ENCODE measurements at regions of chr12 and their contacts with region 1.

Region 1: DNA sequence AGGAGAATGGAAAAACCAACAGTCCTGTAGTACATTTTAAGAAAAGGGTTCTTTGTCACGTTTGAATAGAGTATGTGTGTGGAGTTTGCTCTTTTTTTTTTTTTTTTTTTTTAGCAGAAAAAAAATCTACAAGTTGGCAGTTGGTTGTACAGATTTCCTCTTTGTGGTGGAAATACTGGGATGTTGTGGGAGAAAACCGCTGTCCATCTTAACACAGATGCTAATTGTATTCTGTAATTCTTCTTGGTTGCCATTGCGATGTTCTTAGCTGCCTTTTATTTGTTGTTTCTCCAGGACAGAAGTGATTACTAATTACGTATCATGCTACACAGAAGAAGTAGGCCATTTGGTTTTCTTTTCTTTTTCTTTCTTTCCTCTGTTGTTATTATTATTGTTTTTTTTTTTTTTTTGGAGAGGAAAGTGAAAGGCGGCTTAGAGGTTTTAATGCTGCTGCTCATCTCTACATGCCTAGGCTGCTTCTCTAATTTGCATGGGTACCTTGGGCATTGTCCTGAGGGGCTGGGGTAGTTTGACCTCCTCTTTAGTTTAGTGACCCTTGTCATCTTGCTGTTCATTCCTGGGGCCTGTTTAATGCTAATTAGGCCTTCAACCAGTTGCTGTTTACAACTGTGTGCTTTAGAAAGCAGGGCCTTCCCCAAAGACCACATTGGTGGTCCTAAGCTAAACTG is 94.7 kb downstream of the TMTC2 start:
- DNase-seq: peak; percentile 30
- H3K4me3 ChIP-seq: no peak overlapping the region
- H3K27ac ChIP-seq: no peak overlapping the region
- H3K4me1 ChIP-seq: no peaks in the 10 kb centered on the region
- H3K27me3 ChIP-seq: no peaks in the 10 kb centered on the region
- CTCF ChIP-seq: no peak

Region 2: DNA sequence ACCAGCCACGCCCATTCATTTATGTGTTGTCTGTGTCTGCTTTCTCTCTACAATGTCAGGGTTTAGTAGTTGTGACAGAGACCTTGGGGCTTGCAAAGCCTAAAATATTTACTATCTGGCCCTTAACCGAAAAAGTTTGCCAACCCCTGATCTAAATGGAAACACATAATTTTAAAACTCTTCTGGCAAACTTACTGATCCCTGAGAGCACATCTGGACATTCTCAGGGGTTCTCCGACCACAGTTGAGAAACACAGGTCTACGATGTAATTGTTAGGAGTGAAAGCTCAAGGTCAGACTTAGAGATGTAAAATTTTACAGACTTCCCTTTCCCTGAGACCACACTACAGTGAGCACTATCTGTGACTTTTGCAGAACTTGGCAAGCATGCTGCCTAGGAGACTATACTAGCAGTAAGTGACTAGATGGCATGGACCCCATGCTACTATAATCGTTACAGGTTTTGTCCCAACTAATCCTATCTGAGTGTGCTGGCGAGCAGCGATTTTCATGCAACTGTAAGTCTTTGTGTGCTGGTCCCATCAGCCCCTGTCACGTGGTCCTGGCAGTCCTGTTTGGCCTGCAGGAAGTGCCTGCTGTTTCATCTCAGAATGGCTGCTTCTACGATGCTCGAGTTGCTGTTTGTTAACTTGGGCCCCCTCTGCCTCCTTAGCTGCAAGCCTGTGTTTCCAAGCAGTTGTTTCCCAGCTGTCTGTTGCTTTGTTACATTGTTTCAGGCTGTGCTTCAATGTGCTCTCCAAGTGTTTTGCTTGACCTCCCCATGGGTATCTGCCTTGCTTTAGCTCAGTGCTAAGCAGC is 73.2 kb before region 1 on chr12:
- CTCF ChIA-PET with region 1: no interaction called
- dilution Hi-C with region 1: no loop called
- in situ Hi-C with region 1: no loop called
- intact Hi-C with region 1: no loop called
- DNase-seq: no peak
- H3K4me3 ChIP-seq: no peak overlapping the region
- H3K27ac ChIP-seq: no peak overlapping the region
- H3K4me1 ChIP-seq: no peaks in the 10 kb centered on the region
- H3K27me3 ChIP-seq: no peaks in the 10 kb centered on the region
- CTCF ChIP-seq: no peak

Region 3: DNA sequence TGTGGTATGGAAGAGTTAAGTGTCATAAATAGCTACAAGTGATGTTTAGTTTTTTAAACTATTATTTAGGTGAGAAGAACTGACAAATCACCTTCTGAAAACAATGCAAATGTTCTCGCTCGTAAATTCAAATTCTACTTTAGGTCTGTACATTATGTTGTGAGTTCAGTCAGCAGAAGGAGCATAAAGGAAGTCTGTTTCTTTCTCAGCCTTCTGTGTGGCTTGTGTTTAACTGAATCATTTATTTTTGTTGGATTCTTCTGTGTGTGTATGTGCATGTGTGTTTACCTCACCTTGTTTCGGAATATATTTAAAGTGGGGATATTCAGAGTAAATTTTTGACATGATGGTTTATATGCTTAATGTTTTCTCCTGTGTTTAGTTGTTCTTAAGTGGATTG is 191.2 kb after region 1 on chr12:
- CTCF ChIA-PET with region 1: interaction called, 13 read pairs
- dilution Hi-C with region 1: no loop called
- in situ Hi-C with region 1: no loop called
- intact Hi-C with region 1: no loop called
- DNase-seq: no peak
- H3K4me3 ChIP-seq: no peak overlapping the region
- H3K27ac ChIP-seq: no peak overlapping the region
- H3K4me1 ChIP-seq: no peaks in the 10 kb centered on the region
- H3K27me3 ChIP-seq: no peaks in the 10 kb centered on the region
- CTCF ChIP-seq: no peak